ENCODE measurements at regions of chr1 and their contacts with region 1.

Region 1: GRCh38 chr1:84152649-84153056 is 8.6 kb downstream of the PRKACB start:
- DNase-seq: peak; percentile 43
- H3K4me3 Mint-ChIP-seq: peak overlapping the region; percentile 39
- H3K27ac Mint-ChIP-seq: peak overlapping the region; percentile 86
- H3K4me1 Mint-ChIP-seq: peaks cover 79% of the 10 kb centered on the region
- H3K27me3 Mint-ChIP-seq: no peaks in the 10 kb centered on the region

Region 2: DNA sequence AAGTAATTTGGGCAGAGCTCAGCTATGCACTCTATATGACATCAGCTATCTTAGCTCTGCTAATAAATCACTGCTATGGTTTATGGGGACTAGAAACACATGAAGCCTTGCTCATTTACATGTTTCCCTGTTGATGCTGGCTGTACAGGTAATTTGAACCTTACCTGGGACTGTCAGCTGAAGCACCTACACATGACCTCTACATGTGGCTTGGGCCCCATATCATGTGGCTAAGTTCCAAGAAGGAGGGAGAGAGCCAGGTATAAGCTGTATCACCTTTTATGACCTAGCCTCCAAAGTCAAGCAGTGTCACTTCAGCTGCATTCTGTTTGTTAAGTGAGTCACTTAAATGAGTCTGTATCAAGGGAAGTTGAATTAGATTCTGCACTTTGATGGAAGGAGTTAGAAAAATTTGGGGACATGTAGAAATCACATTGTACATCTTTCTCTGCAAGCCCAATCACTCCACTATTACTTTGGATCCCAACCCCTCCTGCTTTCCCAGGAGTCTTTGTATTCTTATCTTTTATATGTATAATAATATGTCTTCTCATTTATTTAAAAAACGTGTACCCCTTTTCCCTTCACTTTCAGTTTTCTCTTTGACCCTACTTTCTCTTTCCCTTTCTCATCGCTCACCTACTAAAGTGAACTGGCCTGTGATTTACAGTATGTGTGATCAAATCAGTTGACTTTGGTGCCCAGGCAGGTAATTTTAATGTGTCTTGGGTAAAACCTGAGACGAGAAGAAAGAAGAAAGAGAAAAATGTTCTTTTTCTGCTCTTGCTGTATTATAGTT is 62.0 kb before region 1 on chr1:
- CTCF ChIA-PET with region 1: no interaction called
- POLR2A ChIA-PET with region 1: no interaction called
- intact Hi-C with region 1: loop called (anchors 1 kb)
- DNase-seq: peak; percentile 8
- H3K4me3 Mint-ChIP-seq: peak overlapping the region; percentile 39
- H3K27ac Mint-ChIP-seq: peak overlapping the region; percentile 46
- H3K4me1 Mint-ChIP-seq: peaks cover 23% of the 10 kb centered on the region
- H3K27me3 Mint-ChIP-seq: peaks cover 3% of the 10 kb centered on the region

Region 3: DNA sequence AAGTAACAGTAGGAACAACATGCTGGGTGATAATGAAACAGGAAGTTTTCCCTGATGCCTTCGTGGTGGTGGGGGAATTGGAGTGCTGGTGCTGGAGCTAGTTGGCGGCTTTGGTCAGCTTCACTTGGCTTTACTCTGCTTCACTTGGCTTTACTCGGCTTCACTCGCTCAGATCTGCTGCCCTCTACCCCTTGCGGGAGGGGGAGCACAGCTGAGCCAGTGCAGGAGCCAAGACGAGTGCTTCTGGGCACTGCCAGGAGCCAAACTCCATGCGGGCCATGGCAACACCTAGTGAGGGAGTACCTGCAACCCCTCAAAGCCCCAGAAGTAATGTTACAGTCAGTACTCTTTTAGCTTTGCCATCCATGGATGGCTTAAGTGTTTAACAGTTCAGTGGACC is 19.2 kb before region 1 on chr1:
- CTCF ChIA-PET with region 1: no interaction called
- POLR2A ChIA-PET with region 1: no interaction called
- intact Hi-C with region 1: no loop called
- DNase-seq: no peak
- H3K4me3 Mint-ChIP-seq: no peak overlapping the region
- H3K27ac Mint-ChIP-seq: no peak overlapping the region
- H3K4me1 Mint-ChIP-seq: peaks cover 12% of the 10 kb centered on the region
- H3K27me3 Mint-ChIP-seq: peaks cover 1% of the 10 kb centered on the region

Region 4: DNA sequence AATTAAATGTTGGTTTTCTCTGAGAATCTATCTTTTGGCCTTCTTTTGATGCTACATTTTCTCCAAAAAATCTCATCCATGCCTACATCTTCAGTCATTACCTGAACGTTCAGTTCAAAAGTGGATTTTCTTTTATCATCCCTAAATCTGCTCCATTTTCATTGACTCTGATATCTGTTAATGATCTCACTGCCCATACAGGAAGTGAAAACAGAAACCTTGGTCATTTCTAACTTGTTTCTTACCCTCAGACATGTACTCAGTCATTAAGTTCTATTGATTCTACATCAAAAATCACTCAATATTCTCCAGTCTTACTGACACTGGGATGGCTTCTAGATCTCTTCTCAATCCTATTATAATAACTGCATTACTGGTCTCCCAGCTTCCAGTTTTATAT is 14.1 kb after region 1 on chr1:
- CTCF ChIA-PET with region 1: interaction called, 3 read pairs
- POLR2A ChIA-PET with region 1: no interaction called
- intact Hi-C with region 1: loop called (anchors 1 kb)
- DNase-seq: no peak
- H3K4me3 Mint-ChIP-seq: no peak overlapping the region
- H3K27ac Mint-ChIP-seq: no peak overlapping the region
- H3K4me1 Mint-ChIP-seq: peaks cover 74% of the 10 kb centered on the region
- H3K27me3 Mint-ChIP-seq: no peaks in the 10 kb centered on the region

Region 5: DNA sequence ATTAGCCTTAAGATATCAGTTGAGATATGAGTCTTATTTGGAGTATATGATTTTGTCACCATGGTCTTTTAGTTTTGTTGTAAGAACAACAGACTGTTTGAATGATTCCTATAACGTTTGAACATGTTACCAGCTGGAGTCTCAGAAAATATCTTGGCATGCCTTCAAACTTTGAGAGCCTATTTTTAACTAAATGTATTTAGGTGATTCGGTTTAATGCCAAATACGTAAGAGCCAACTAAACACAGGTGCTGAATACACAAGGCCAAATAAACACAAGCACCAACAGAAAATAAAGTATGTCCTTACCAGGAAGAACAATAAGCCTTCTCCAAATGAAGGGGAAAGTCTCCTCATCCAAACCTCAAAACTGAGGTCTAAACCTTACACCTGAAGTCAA is 40.0 kb after region 1 on chr1:
- CTCF ChIA-PET with region 1: no interaction called
- POLR2A ChIA-PET with region 1: no interaction called
- intact Hi-C with region 1: loop called (anchors 5 kb)
- DNase-seq: no peak
- H3K4me3 Mint-ChIP-seq: no peak overlapping the region
- H3K27ac Mint-ChIP-seq: no peak overlapping the region
- H3K4me1 Mint-ChIP-seq: no peaks in the 10 kb centered on the region
- H3K27me3 Mint-ChIP-seq: no peaks in the 10 kb centered on the region

Region 6: DNA sequence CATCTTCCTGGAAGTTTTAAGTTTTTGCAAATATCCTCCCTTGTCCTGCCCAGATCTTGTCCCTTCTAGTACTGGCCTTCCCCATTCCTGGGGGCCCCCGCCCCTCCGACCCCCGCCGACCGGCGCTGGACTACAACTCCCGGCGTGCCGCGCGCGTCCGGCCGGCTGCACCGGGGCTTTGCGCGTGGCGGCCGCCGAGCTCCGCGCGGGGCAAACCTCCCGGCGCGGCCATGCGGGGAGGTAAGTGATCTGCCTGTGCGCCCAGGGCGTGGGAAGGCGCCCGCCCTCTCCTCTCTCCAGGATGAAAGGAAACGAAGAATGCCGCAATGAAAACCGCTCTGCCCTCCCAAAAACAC is 145.7 kb after region 1 on chr1:
- CTCF ChIA-PET with region 1: no interaction called
- POLR2A ChIA-PET with region 1: no interaction called
- intact Hi-C with region 1: loop called (anchors 2 kb)
- DNase-seq: peak; percentile 56
- H3K4me3 Mint-ChIP-seq: peak overlapping the region; percentile 82
- H3K27ac Mint-ChIP-seq: no peak overlapping the region
- H3K4me1 Mint-ChIP-seq: peaks cover 35% of the 10 kb centered on the region
- H3K27me3 Mint-ChIP-seq: peaks cover 24% of the 10 kb centered on the region

Measured in activated CD4-positive, alpha-beta memory T cell treated with anti-CD3 and anti-CD28 coated beads for 36 hours (primary cell).